ENCODE measurements at regions of chr2 and their contacts with region 1.

Region 1: GRCh38 chr2:196639180-196640030 is at the start of gene CCDC150:
- DNase-seq: peak; percentile 93
- H3K4me3 Mint-ChIP-seq: peak within 1 kb of the TSS; percentile 90
- H3K27ac Mint-ChIP-seq: peak within 1 kb of the TSS; percentile 65
- H3K4me1 Mint-ChIP-seq: peaks cover 24% of the 10 kb centered on the region
- H3K27me3 Mint-ChIP-seq: peaks cover 11% of the 10 kb centered on the region
- total RNA-seq, gene CCDC150: 13.6 and 17.8 TPM in 2 replicates

Region 2: DNA sequence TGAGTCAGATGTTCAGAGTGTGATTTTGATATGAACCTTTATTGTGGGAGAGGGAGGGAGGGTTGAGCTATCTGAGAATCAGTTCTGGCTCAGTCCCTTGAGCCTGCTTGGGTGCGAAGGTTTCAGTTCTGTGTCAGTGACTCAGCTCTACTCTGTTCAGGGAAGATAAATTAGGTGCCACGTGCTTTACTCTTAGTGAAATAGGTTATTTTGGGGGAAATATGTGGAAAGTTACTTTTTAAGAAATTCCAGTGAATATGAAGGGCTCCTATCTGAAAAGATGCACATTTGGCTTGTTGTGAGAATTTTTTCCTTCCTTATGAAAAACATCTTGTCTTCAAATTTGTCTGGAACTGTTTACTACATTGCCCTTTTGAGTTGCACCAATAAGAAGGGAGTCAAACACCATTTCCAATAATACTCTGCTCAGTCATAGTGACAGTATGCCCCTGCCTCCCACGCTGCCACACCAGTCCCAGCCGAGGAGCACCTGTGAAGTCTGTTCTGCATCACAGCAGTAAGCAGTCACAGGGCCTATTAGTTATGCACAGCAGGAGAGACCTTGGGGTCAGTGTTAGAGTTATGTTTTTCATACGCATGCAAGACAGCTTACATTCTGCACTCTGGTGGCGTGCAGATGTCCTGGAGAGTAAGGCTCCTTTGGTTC is 537.9 kb before region 1 on chr2:
- intact Hi-C with region 1: no loop called
- DNase-seq: no peak
- H3K4me3 Mint-ChIP-seq: no peak overlapping the region
- H3K27ac Mint-ChIP-seq: no peak overlapping the region
- H3K4me1 Mint-ChIP-seq: peaks cover 23% of the 10 kb centered on the region
- H3K27me3 Mint-ChIP-seq: peaks cover 5% of the 10 kb centered on the region

Region 3: DNA sequence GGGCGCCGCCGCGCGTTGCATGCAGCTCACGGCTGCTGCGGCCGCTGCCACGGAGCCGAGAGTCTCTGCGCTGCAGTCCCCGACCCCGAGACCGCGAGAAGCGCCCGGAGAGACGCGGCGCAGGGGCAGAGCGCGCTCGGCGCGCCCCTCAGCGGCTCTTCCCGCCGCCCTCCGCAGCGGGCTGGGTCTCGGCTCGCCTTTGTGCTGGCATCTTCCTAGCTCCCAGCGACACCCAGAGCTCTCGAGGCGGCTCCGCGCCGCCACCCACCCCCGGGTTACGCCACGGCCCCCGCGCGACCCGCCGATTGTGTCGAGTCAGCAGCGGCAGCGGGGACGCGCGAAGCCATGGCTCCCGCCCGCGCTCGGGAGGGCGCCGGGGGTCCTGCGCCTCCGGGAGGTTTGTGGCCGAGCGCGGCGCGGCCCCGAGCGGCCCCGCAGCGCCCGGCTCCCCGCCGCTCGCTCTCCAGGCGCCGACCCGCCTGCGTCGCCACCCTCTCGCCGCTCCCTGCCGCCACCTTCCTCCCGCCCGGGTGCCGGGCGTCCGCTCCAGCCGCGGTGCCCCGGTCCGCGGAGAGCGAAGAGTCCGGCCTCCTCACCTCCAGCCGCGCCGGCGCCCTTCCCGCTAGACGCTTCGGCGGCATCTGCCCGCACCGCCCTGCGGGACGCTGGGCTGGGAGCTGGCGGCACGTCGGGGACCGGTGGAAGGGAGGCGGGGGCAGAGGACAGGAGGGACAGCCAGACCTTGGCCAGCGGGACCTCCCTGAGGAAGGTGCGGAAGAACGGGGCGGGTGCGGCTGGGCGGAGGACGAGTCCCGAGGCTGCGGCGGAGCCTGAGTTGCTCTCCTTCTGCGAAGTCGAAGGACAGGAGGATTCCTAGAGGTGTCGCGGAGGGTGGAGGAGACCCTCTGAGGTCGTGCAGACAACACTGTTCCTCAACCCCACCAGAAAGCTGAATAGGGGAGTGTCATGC is 46.2 kb before region 1 on chr2:
- intact Hi-C with region 1: loop called (anchors 2 kb)
- DNase-seq: peak; percentile 15
- H3K4me3 Mint-ChIP-seq: peak within 1 kb of the TSS; percentile 77
- H3K27ac Mint-ChIP-seq: no peak within 1 kb of the TSS
- H3K4me1 Mint-ChIP-seq: peaks cover 7% of the 10 kb centered on the region
- H3K27me3 Mint-ChIP-seq: peaks cover 74% of the 10 kb centered on the region

Region 4: DNA sequence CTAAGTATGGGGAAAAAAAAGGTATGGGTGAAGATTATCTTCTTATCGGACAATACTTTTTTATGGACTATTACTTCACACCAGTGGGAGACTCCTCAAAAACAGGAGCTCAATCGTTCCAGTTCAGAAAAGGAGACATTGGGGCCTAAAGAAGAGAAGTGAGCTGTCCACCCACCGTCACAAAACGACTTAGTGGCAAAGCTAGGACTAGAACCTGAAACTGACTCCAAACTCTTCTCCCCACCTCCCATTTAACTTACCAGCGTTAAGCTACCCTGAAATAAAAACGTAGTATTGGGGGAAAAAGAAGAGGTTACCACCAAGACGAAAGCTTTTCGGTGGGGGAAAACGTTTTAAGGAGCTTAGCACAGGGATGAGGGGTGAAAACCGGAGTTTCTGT is 159.6 kb after region 1 on chr2:
- intact Hi-C with region 1: loop called (anchors 5 kb)
- DNase-seq: no peak
- H3K4me3 Mint-ChIP-seq: peak overlapping the region; percentile 98
- H3K27ac Mint-ChIP-seq: peak overlapping the region; percentile 95
- H3K4me1 Mint-ChIP-seq: peaks cover 28% of the 10 kb centered on the region
- H3K27me3 Mint-ChIP-seq: no peaks in the 10 kb centered on the region

Region 5: GRCh38 chr2:197248623-197249022 is 609.2 kb after region 1 on chr2:
- intact Hi-C with region 1: no loop called
- DNase-seq: no peak
- H3K4me3 Mint-ChIP-seq: peak overlapping the region; percentile 34
- H3K27ac Mint-ChIP-seq: peak overlapping the region; percentile 79
- H3K4me1 Mint-ChIP-seq: peaks cover 66% of the 10 kb centered on the region
- H3K27me3 Mint-ChIP-seq: no peaks in the 10 kb centered on the region

Region 6: GRCh38 chr2:197453161-197453914 is 813.9 kb after region 1 on chr2 and contains the start of gene COQ10B:
- intact Hi-C with region 1: loop called (anchors 2 kb)
- DNase-seq: peak; percentile 99
- H3K4me3 Mint-ChIP-seq: peak within 1 kb of the TSS; percentile 99
- H3K27ac Mint-ChIP-seq: peak within 1 kb of the TSS; percentile 100
- H3K4me1 Mint-ChIP-seq: peaks cover 26% of the 10 kb centered on the region
- H3K27me3 Mint-ChIP-seq: no peaks in the 10 kb centered on the region
- total RNA-seq, gene COQ10B: 19.9 and 20.8 TPM in 2 replicates